ENCODE measurements at regions of chr11 and their contacts with region 1.

Region 1: DNA sequence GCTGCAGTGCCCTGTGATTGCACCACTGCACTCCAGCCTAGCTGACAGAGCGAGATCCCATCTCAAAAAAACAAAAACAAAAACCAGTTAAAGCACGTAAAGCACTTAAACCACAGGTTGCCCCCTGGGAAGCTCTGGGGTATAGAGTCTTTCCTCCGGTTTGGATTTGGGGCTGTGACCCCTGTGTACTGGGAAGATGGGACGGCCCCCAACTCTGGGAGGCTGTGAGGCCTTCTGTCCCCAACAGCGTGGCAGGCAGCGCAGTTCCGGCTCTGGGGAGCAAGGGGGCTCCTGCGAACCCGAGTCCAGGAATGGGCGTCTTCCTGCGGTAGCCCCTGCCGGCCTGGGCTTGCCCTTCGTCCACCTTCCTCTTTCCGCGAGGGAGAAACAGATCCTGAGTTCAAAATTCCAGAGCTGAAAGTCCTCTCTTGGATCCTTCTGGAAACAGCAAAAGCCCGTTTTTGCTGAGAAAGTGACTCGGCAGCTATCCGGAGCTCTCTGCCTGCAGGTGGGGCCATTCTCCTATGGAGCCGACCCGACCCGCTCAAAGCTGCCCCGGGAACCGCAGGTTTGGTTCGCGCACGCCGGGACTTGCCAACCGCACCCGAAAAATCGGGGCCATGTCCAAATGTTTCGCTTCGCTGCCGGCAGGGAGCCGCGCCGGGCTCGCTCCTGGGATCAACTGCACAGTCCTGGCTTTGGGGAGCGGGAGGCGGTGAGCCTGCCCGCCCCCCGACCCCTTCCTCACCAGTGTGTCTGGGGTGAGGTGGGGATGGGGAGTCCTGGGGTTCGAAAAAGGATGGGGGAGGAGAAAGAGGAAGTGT is 36.3 kb upstream of the POLA2 start:
- DNase-seq: peak; percentile 55
- H3K4me3 ChIP-seq: peak overlapping the region; percentile 34 to 65 (median 47)
- H3K27ac ChIP-seq: peak overlapping the region; percentile 12
- H3K4me1 ChIP-seq: peaks cover 20% of the 10 kb centered on the region
- H3K27me3 ChIP-seq: no peaks in the 10 kb centered on the region
- CTCF ChIP-seq: peak; percentile 50 to 58
- POLR2A ChIP-seq: no peak

Region 2: DNA sequence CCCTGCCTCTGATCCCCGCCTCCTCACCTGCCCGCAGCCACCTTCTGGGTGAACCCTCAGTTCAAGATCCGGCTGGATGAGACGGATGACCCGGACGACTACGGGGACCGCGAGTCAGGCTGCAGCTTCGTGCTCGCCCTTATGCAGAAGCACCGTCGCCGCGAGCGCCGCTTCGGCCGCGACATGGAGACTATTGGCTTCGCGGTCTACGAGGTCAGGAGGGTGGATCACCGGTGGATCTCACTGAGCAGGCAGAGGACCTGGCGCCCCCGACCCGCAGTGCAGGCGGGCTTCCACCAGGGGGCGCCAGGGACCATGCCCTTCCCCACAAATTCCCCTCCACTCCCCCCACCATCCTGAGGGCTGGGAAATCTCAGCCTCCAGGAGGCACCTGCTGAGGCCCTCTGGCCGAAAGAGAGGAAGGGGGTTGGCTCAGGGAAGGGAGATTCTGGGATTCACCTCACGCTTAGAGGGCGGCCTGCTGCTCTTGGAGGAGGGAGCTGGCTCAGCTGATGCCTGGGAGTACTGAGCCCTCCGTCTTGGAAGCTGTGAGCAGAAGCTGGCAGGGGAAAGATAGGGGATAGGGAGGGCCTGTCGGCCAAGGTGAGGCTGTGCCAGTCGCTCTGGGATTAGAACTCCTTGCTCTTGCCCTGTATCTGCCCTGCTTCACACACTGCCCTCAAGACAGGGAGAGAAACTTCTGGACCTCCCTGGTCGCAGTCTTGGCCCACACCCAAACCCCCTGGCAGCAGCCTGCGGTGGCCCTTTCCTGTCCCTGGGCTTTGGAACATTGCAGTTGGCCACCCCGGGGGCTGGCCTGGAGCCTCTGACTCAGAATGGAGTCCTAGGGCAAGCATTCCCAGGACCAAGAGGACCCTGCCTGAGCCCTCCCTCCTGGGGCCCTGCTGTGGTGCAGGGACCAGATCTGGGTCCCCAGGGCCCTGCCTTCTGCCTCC is 20.6 kb before region 1 on chr11:
- CTCF ChIA-PET with region 1: interaction called, 12 read pairs
- POLR2A ChIA-PET with region 1: no interaction called
- dilution Hi-C with region 1: no loop called
- intact Hi-C with region 1: loop called (anchors 2 kb)
- DNase-seq: peak; percentile 40
- H3K4me3 ChIP-seq: no peak overlapping the region
- H3K27ac ChIP-seq: no peak overlapping the region
- H3K4me1 ChIP-seq: no peaks in the 10 kb centered on the region
- H3K27me3 ChIP-seq: no peaks in the 10 kb centered on the region
- CTCF ChIP-seq: peak; percentile 83 to 98
- POLR2A ChIP-seq: no peak

Region 3: DNA sequence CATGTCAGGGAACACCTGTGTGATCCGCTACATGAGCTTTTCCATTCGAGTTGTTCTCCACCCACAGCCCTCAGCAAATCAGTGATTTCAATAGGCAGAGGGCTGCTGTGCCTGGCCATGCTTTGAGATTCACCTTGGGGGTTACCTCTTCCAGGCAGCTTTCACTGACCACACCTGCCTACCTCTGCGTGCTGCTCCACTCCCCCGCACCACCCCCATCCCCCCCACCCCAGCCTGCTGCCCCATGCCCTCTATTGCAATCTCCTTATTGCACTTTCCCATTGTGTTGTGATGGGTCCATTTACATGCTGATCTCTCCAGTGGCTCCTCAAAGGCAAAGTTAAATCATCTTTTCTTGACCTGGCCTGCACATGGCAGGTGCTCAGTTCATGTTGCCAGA is 18.3 kb after region 1 on chr11:
- CTCF ChIA-PET with region 1: interaction called, 13 read pairs
- POLR2A ChIA-PET with region 1: no interaction called
- dilution Hi-C with region 1: no loop called
- intact Hi-C with region 1: no loop called
- DNase-seq: no peak
- H3K4me3 ChIP-seq: no peak overlapping the region
- H3K27ac ChIP-seq: no peak overlapping the region
- H3K4me1 ChIP-seq: no peaks in the 10 kb centered on the region
- H3K27me3 ChIP-seq: no peaks in the 10 kb centered on the region
- CTCF ChIP-seq: no peak
- POLR2A ChIP-seq: no peak

Region 4: GRCh38 chr11:65261591-65262380 is 36.3 kb after region 1 on chr11 and contains the start of gene POLA2:
- CTCF ChIA-PET with region 1: interaction called, 10 read pairs
- POLR2A ChIA-PET with region 1: no interaction called
- dilution Hi-C with region 1: no loop called
- intact Hi-C with region 1: no loop called
- DNase-seq: peak; percentile 97
- H3K4me3 ChIP-seq: peak within 1 kb of the TSS; percentile 65 to 83 (median 82)
- H3K27ac ChIP-seq: peak within 1 kb of the TSS; percentile 79
- H3K4me1 ChIP-seq: peaks cover 11% of the 10 kb centered on the region
- H3K27me3 ChIP-seq: no peaks in the 10 kb centered on the region
- CTCF ChIP-seq: no peak
- POLR2A ChIP-seq: peak; percentile 98
- total RNA-seq, gene POLA2: 24.0 and 25.4 TPM in 2 replicates

Region 5: GRCh38 chr11:65314501-65315203 is 89.2 kb after region 1 on chr11 and contains the start of gene CDC42EP2:
- CTCF ChIA-PET with region 1: interaction called, 48 read pairs
- POLR2A ChIA-PET with region 1: no interaction called
- dilution Hi-C with region 1: no loop called
- intact Hi-C with region 1: loop called (anchors 1 kb)
- DNase-seq: peak; percentile 88
- H3K4me3 ChIP-seq: peak within 1 kb of the TSS; percentile 87 to 97 (median 90)
- H3K27ac ChIP-seq: peak within 1 kb of the TSS; percentile 84
- H3K4me1 ChIP-seq: peaks cover 31% of the 10 kb centered on the region
- H3K27me3 ChIP-seq: no peaks in the 10 kb centered on the region
- CTCF ChIP-seq: no peak
- POLR2A ChIP-seq: peak; percentile 98
- total RNA-seq, gene CDC42EP2: 23.4 and 23.9 TPM in 2 replicates

Region 6: DNA sequence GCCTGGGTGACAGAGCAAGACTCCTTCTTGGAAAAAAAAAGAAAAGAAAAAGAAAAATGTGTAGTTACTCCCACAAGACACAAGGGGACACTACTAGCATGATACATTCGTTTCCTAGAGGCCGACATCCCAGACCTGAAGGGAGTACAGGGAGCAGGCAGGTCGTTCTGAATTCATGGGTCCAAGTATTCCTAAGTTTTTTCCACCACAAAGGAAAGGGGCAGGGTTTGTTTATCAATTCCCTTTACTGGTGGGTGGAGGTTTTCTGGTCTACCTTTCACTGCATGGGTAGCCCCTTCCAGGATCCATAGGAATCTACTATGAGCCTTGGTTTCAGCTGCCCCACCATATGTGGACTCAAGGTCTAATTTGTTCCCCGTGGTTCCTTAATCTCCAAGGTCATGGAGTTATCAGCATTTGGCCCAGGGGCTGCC is 140.9 kb after region 1 on chr11:
- CTCF ChIA-PET with region 1: no interaction called
- POLR2A ChIA-PET with region 1: no interaction called
- dilution Hi-C with region 1: no loop called
- intact Hi-C with region 1: no loop called
- DNase-seq: peak; percentile 78
- H3K4me3 ChIP-seq: no peak overlapping the region
- H3K27ac ChIP-seq: no peak overlapping the region
- H3K4me1 ChIP-seq: peaks cover 7% of the 10 kb centered on the region
- H3K27me3 ChIP-seq: no peaks in the 10 kb centered on the region
- CTCF ChIP-seq: peak; percentile 49 to 66
- POLR2A ChIP-seq: no peak

Measured in endothelial cell of umbilical vein (primary cell).